ENCODE measurements at regions of chr4 and their contacts with region 1.

Region 1: GRCh38 chr4:101252721-101253120 is 94.6 kb downstream of the PPP3CA start:
- DNase-seq: no peak
- ATAC-seq: no peak
- H3K4me3 ChIP-seq: no peak overlapping the region
- H3K4me3 Mint-ChIP-seq: no peak overlapping the region
- H3K27ac ChIP-seq: no peak overlapping the region
- H3K27ac Mint-ChIP-seq: no peak overlapping the region
- H3K4me1 ChIP-seq: peaks cover 6% of the 10 kb centered on the region
- H3K4me1 Mint-ChIP-seq: peaks cover 32% of the 10 kb centered on the region
- H3K27me3 ChIP-seq: no peaks in the 10 kb centered on the region
- H3K27me3 Mint-ChIP-seq: no peaks in the 10 kb centered on the region
- CTCF ChIP-seq: no peak

Region 2: DNA sequence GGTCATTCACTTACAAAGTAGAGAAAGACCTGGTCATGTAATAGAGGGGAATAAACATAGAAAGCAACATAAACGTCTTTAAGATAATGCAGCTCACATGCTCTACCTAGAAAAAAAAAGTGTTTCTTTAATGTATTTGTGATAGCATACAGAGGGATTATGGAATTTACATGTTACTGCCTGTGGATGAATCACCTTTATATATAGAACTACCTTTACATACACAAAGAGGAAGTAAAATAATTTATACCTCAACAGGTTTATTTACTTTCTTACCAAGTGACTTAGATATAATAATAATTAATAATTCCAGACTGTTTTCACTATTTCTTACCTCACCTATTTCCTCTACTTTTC is 13.1 kb after region 1 on chr4:
- CTCF ChIA-PET with region 1: no interaction called
- POLR2A ChIA-PET with region 1: no interaction called
- intact Hi-C with region 1: loop called in 1 of 2 experiments (anchors 2 kb)
- DNase-seq: no peak
- ATAC-seq: no peak
- H3K4me3 ChIP-seq: no peak overlapping the region
- H3K4me3 Mint-ChIP-seq: no peak overlapping the region
- H3K27ac ChIP-seq: no peak overlapping the region
- H3K27ac Mint-ChIP-seq: no peak overlapping the region
- H3K4me1 ChIP-seq: no peaks in the 10 kb centered on the region
- H3K4me1 Mint-ChIP-seq: peaks cover 44% of the 10 kb centered on the region
- H3K27me3 ChIP-seq: no peaks in the 10 kb centered on the region
- H3K27me3 Mint-ChIP-seq: no peaks in the 10 kb centered on the region
- CTCF ChIP-seq: no peak